ENCODE measurements at regions of chr6 and their contacts with region 1.

Region 1: GRCh38 chr6:126955621-126956020 is 162.8 kb upstream of the RSPO3 start:
- DNase-seq: peak; percentile 65 to 85
- H3K4me3 ChIP-seq: no peak overlapping the region
- H3K27ac ChIP-seq: no peak overlapping the region
- H3K4me1 ChIP-seq: peaks cover 18% of the 10 kb centered on the region
- H3K27me3 ChIP-seq: no peaks in the 10 kb centered on the region
- CTCF ChIP-seq: no peak

Region 2: GRCh38 chr6:126721581-126722145 is 234.0 kb before region 1 on chr6:
- CTCF ChIA-PET with region 1: no interaction called
- POLR2A ChIA-PET with region 1: no interaction called
- intact Hi-C with region 1: loop called (anchors 10 kb)
- DNase-seq: peak; percentile 23 to 95
- H3K4me3 ChIP-seq: peak overlapping the region; percentile 15; the same call in 1 of the 2 replicates
- H3K27ac ChIP-seq: peak overlapping the region; percentile 97
- H3K4me1 ChIP-seq: peaks cover 41% of the 10 kb centered on the region
- H3K27me3 ChIP-seq: no peaks in the 10 kb centered on the region
- CTCF ChIP-seq: no peak

Region 3: DNA sequence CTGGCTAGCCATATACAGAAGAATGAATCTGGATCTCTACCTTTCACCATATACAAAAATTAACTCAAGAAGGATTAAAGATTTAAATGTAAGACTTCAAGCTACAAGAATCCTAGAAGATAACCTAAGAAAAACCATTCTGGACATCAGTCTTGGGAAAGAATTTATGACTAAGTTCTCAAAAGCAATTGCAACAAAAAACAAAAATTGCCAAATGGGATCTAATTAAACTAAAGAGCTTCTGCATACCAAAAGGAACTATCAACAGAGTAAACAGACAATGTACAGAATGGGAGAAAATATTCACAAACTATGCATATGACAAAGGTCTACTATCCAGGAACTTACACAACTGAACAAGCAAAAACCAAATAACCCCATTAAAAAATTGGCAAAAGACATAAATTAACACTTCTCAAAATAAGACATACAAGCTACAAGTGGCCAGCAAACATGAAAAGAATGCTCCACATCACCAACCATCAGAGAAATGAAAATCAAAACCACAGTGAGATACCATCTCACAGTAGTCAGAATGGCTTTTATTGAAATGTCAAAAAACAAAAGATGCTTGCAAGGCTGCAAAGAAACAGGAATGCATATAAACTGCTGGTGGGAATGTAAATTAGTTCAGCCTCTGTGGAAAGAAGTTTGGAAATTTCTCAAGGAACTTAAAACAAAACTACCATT is 96.1 kb after region 1 on chr6:
- CTCF ChIA-PET with region 1: no interaction called
- POLR2A ChIA-PET with region 1: no interaction called
- intact Hi-C with region 1: loop called (anchors 2 kb)
- DNase-seq: no peak
- H3K4me3 ChIP-seq: no peak overlapping the region
- H3K27ac ChIP-seq: no peak overlapping the region
- H3K4me1 ChIP-seq: peaks cover 12% of the 10 kb centered on the region; the same call in 1 of the 2 replicates
- H3K27me3 ChIP-seq: no peaks in the 10 kb centered on the region
- CTCF ChIP-seq: no peak

Measured in PC-9 (cell line).